Naive thymus-derived CD4-positive, alpha-beta T cell (primary cell): ENCODE measurements at regions of chr1 and their contacts with region 1.

Region 1: DNA sequence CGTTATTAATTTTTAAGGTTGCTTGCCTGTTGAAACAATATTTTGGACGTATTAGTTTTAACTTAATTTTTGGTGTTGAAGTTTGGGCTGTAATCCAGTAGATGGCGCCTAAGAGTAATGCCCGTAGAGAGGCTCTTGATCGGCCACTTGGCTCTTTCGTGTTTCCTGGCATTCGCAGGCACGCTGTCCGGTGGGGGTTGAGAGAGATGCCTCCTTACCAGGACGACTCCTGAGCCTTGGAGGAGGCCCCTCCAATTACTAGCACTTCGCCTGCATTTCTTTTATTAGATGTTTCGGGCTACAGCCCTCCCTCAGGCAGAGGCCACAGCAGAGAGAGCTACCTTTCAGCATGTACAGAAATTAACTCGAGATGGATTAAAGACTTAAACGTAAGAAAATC is 12.0 kb downstream of the OR2M4 start:
- DNase-seq: peak in 6 of 9 donors; percentile 4 to 42 (median 24)
- ATAC-seq: peak; percentile 69
- H3K4me3 ChIP-seq: no peak overlapping the region
- H3K4me3 Mint-ChIP-seq: peak overlapping the region in 7 of 10 donors; percentile 8 to 54 (median 42)
- H3K27ac ChIP-seq: no peak overlapping the region
- H3K27ac Mint-ChIP-seq: no peak overlapping the region
- H3K4me1 ChIP-seq: no peaks in the 10 kb centered on the region
- H3K4me1 Mint-ChIP-seq: peaks cover 0 to 6% (median 3%) of the 10 kb centered on the region in 7 donors
- H3K27me3 ChIP-seq: no peaks in the 10 kb centered on the region
- H3K27me3 Mint-ChIP-seq: peaks cover 7 to 39% (median 22%) of the 10 kb centered on the region in 5 donors

Region 2: GRCh38 chr1:248611883-248612414 is 368.7 kb after region 1 on chr1:
- CTCF ChIA-PET with region 1: no interaction called
- POLR2A ChIA-PET with region 1: no interaction called
- intact Hi-C with region 1: loop called in 1 of 2 experiments (anchors 1 kb)
- DNase-seq: peak in 4 of 9 donors; percentile 11 to 33 (median 20)
- ATAC-seq: no peak
- H3K4me3 ChIP-seq: no peak overlapping the region
- H3K4me3 Mint-ChIP-seq: no peak overlapping the region
- H3K27ac ChIP-seq: no peak overlapping the region
- H3K27ac Mint-ChIP-seq: peak overlapping the region in 3 of 9 donors; percentile 5 to 57 (median 25)
- H3K4me1 ChIP-seq: no peaks in the 10 kb centered on the region
- H3K4me1 Mint-ChIP-seq: peaks cover 0 to 31% (median 5%) of the 10 kb centered on the region in 7 donors
- H3K27me3 ChIP-seq: no peaks in the 10 kb centered on the region
- H3K27me3 Mint-ChIP-seq: no peaks in the 10 kb centered on the region